ENCODE measurements at regions of chr18 and their contacts with region 1.

Region 1: GRCh38 chr18:12883684-12884405 is at the start of gene PTPN2:
- DNase-seq: peak; percentile 87 to 98 (median 92)
- ATAC-seq: peak; percentile 83 to 87
- H3K4me3 Mint-ChIP-seq: peak within 1 kb of the TSS; percentile 85 to 98 (median 94)
- H3K27ac Mint-ChIP-seq: peak within 1 kb of the TSS; percentile 87 to 98 (median 96)
- H3K4me1 Mint-ChIP-seq: peaks cover 33 to 67% (median 54%) of the 10 kb centered on the region in 4 donors
- H3K27me3 Mint-ChIP-seq: no peaks in the 10 kb centered on the region
- polyA plus RNA-seq, gene PTPN2: 71.4 to 76.1 (median 74.2) TPM

Region 2: DNA sequence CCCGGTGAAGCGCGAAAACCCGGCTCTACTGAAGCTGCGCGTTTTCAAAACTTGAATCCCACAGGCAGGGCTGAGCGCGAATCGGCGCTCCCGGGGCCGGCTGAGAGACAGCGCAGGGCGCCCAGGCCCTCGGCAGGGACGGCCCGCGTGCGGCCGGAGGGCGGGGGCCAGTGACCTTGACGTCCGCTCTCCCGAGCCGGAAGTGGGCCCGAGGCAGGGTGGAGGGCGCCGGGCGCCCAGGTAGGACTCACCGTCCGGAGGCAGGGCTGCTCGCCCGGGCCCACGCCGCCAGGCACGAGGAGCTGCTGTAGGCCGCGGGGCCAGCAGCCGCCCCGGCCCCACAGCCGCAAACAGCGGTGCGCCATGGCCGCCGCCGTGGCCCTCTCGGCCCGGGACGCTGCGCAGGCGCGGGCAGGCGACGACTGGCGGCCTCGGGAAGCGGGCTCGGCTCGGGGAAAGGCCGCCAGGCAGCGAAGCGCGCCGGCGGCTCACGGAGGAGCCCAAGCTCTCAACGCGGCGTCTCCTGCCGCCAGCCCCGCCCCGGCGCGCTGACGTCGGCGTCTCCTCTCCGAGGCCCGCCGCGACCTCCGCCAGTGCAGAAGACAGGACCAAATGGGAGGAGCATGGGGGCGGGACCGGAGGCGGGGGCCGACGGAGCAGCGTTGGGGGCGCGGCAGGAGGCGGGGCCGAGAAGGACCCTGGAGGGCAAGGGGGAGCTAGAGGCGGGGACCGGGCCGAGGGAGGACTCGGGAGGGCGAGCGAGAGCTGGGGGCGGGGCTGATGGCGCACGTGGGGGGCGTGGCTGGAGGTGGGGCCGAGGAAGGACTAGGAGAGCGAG is 506.9 kb before region 1 on chr18 and contains the start of gene AFG3L2:
- POLR2A ChIA-PET with region 1: interaction called, 43 read pairs
- DNase-seq: peak; percentile 99 to 100 (median 100)
- ATAC-seq: peak; percentile 84 to 87
- H3K4me3 Mint-ChIP-seq: peak within 1 kb of the TSS; percentile 86 to 94 (median 92)
- H3K27ac Mint-ChIP-seq: peak within 1 kb of the TSS; percentile 53 to 94 (median 92)
- H3K4me1 Mint-ChIP-seq: peaks cover 25 to 50% (median 47%) of the 10 kb centered on the region in 4 donors
- H3K27me3 Mint-ChIP-seq: no peaks in the 10 kb centered on the region
- polyA plus RNA-seq, gene AFG3L2: 27.0 to 42.1 (median 37.2) TPM

Region 3: GRCh38 chr18:12776821-12777471 is 106.9 kb before region 1 on chr18:
- POLR2A ChIA-PET with region 1: interaction called, 18 read pairs
- DNase-seq: no peak
- ATAC-seq: peak in 1 of 2 donors; percentile 17
- H3K4me3 Mint-ChIP-seq: peak overlapping the region in 3 of 10 donors; percentile 7 to 74 (median 18)
- H3K27ac Mint-ChIP-seq: no peak overlapping the region
- H3K4me1 Mint-ChIP-seq: peaks cover 6 to 23% (median 11%) of the 10 kb centered on the region in 4 donors
- H3K27me3 Mint-ChIP-seq: no peaks in the 10 kb centered on the region

Region 4: GRCh38 chr18:12911025-12911928 is 27.4 kb after region 1 on chr18:
- POLR2A ChIA-PET with region 1: interaction called, 29 read pairs
- DNase-seq: peak; percentile 15 to 70 (median 54)
- ATAC-seq: peak; percentile 94 to 96
- H3K4me3 Mint-ChIP-seq: peak overlapping the region; percentile 66 to 81 (median 74)
- H3K27ac Mint-ChIP-seq: peak overlapping the region in 9 of 10 donors; percentile 9 to 73 (median 50)
- H3K4me1 Mint-ChIP-seq: peaks cover 4 to 10% (median 8%) of the 10 kb centered on the region in 4 donors
- H3K27me3 Mint-ChIP-seq: peaks cover 0 to 1% (median 0%) of the 10 kb centered on the region in 5 donors

Region 5: GRCh38 chr18:12990967-12991838 is 107.4 kb after region 1 on chr18 and contains the start of gene CEP192:
- POLR2A ChIA-PET with region 1: interaction called, 18 read pairs
- DNase-seq: peak; percentile 95 to 99 (median 97)
- ATAC-seq: peak; percentile 93 to 97
- H3K4me3 Mint-ChIP-seq: peak within 1 kb of the TSS; percentile 89 to 99 (median 97)
- H3K27ac Mint-ChIP-seq: peak within 1 kb of the TSS; percentile 84 to 98 (median 94)
- H3K4me1 Mint-ChIP-seq: peaks cover 18 to 34% (median 20%) of the 10 kb centered on the region in 4 donors
- H3K27me3 Mint-ChIP-seq: no peaks in the 10 kb centered on the region
- polyA plus RNA-seq, gene CEP192: 3.0 to 6.7 (median 5.2) TPM

Region 6: GRCh38 chr18:13039806-13040205 is 156.0 kb after region 1 on chr18:
- POLR2A ChIA-PET with region 1: no interaction called
- DNase-seq: no peak
- ATAC-seq: no peak
- H3K4me3 Mint-ChIP-seq: no peak overlapping the region
- H3K27ac Mint-ChIP-seq: peak overlapping the region in 7 of 10 donors; percentile 9 to 69 (median 28)
- H3K4me1 Mint-ChIP-seq: peaks cover 2 to 18% (median 15%) of the 10 kb centered on the region in 4 donors
- H3K27me3 Mint-ChIP-seq: no peaks in the 10 kb centered on the region

Measured in naive thymus-derived CD8-positive, alpha-beta T cell (primary cell).